ENCODE measurements at regions of chr17 and their contacts with region 1.

Region 1: DNA sequence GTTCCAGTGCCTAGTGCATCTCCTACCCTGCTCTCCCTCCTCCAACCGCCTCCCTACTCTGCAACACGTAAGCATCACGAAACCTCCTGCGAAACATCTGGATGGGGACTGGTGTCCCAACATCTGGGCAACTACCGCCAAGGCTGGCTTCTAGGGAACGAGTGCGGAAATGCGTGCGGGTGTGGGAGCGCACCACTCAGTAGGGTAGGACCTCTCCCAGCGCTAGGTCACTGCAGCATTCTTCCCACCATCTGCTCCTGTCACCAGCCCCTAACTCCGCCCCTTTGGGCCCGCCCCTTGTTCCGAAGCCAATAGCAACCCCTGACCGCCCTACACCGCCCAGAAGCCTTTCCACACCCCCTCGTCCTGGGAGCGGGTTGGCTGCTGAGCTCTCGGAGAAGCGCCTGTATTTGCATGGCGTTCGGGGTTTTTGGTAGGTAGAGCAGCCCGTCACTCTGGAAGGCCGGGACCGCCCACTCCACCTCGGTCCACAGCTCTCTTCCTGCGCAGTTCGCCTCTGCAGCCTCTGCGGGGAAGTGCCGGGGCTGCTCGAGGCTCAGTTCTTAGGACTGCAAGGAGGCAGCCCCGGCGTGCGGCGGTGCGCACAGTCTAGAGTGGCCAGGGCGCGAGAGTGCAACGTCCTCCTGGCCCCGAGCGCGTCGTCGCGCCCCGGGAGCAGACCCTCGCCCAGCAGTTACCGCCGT is at the start of gene HS3ST3B1:
- DNase-seq: peak; percentile 100
- ATAC-seq: peak; percentile 90
- H3K4me3 Mint-ChIP-seq: peak within 1 kb of the TSS; percentile 92
- H3K27ac Mint-ChIP-seq: peak within 1 kb of the TSS; percentile 92
- H3K4me1 Mint-ChIP-seq: peaks cover 51% of the 10 kb centered on the region
- H3K27me3 Mint-ChIP-seq: peaks cover 28% of the 10 kb centered on the region
- CTCF ChIP-seq: no peak
- total RNA-seq, gene HS3ST3B1: 4.9 to 5.1 TPM

Region 2: DNA sequence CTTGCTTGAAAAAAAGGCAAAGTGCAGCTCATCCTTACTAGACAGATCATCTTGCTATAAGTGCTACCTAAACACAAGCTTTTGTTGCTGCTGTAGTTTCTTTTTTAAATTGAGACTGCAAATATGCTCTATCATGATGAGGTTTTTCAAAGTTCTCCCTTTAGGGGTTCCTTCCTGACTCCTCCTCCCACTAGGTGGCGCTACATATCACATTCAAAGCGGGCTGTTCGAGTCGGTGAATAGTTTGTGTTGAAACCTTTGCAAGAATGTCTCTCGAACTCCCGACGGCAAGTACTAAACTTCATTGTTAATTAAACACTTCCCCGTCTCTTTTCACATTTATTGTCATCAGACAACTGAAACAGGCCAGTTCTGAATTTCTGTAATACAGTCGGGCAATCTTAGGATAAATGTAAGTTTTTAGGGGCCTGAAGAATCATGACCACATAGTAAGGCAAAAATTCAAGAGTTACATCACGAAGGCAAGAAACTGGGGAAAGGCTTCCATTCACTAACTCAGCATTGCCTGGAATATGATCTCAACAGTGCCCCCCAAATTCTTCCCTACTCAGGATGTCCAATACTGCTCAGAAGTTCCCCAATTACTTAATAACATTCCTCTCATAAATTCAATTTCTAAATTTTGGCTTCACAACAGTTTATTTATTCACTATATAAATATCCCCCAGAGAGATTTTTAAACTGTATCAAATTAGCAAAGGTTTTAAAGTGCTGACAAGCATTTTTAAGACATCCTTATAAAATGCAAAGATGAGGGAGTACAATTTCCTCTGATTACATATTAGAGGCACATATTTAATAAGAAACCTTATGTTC is 705.7 kb before region 1 on chr17:
- CTCF ChIA-PET with region 1: interaction called, 10 read pairs
- POLR2A ChIA-PET with region 1: no interaction called
- intact Hi-C with region 1: loop called (anchors 5 kb)
- DNase-seq: peak; percentile 86
- ATAC-seq: peak; percentile 69
- H3K4me3 Mint-ChIP-seq: no peak overlapping the region
- H3K27ac Mint-ChIP-seq: no peak overlapping the region
- H3K4me1 Mint-ChIP-seq: peaks cover 5% of the 10 kb centered on the region
- H3K27me3 Mint-ChIP-seq: peaks cover 20% of the 10 kb centered on the region
- CTCF ChIP-seq: peak; percentile 79

Region 3: GRCh38 chr17:14143688-14144087 is 157.0 kb before region 1 on chr17:
- CTCF ChIA-PET with region 1: no interaction called
- POLR2A ChIA-PET with region 1: no interaction called
- intact Hi-C with region 1: no loop called
- DNase-seq: no peak
- ATAC-seq: no peak
- H3K4me3 Mint-ChIP-seq: no peak overlapping the region
- H3K27ac Mint-ChIP-seq: no peak overlapping the region
- H3K4me1 Mint-ChIP-seq: peaks cover 11% of the 10 kb centered on the region
- H3K27me3 Mint-ChIP-seq: no peaks in the 10 kb centered on the region
- CTCF ChIP-seq: no peak

Region 4: GRCh38 chr17:14196377-14196997 is 104.2 kb before region 1 on chr17:
- CTCF ChIA-PET with region 1: interaction called, 5 read pairs
- POLR2A ChIA-PET with region 1: interaction called, 6 read pairs
- intact Hi-C with region 1: loop called (anchors 5 kb)
- DNase-seq: peak; percentile 27
- ATAC-seq: peak; percentile 48
- H3K4me3 Mint-ChIP-seq: no peak overlapping the region
- H3K27ac Mint-ChIP-seq: peak overlapping the region; percentile 85
- H3K4me1 Mint-ChIP-seq: peaks cover 85% of the 10 kb centered on the region
- H3K27me3 Mint-ChIP-seq: no peaks in the 10 kb centered on the region
- CTCF ChIP-seq: peak; percentile 55

Region 5: GRCh38 chr17:14337596-14338079 is 36.9 kb after region 1 on chr17:
- CTCF ChIA-PET with region 1: interaction called, 4 read pairs
- POLR2A ChIA-PET with region 1: interaction called, 20 read pairs
- intact Hi-C with region 1: loop called (anchors 5 kb)
- DNase-seq: peak; percentile 92
- ATAC-seq: peak; percentile 89
- H3K4me3 Mint-ChIP-seq: no peak overlapping the region
- H3K27ac Mint-ChIP-seq: peak overlapping the region; percentile 70
- H3K4me1 Mint-ChIP-seq: peaks cover 83% of the 10 kb centered on the region
- H3K27me3 Mint-ChIP-seq: no peaks in the 10 kb centered on the region
- CTCF ChIP-seq: no peak

Region 6: GRCh38 chr17:14926526-14927122 is 625.9 kb after region 1 on chr17:
- CTCF ChIA-PET with region 1: interaction called, 3 read pairs
- POLR2A ChIA-PET with region 1: no interaction called
- intact Hi-C with region 1: loop called (anchors 10 kb)
- DNase-seq: peak; percentile 63
- ATAC-seq: no peak
- H3K4me3 Mint-ChIP-seq: no peak overlapping the region
- H3K27ac Mint-ChIP-seq: no peak overlapping the region
- H3K4me1 Mint-ChIP-seq: no peaks in the 10 kb centered on the region
- H3K27me3 Mint-ChIP-seq: peaks cover 10% of the 10 kb centered on the region
- CTCF ChIP-seq: peak; percentile 86

Measured in activated CD8-positive, alpha-beta T cell treated with anti-CD3 and anti-CD28 coated beads for 36 hours (primary cell).